Esophagus squamous epithelium (tissue), 5 donors: ENCODE measurements at regions of chr1 and their contacts with region 1.

Region 1: DNA sequence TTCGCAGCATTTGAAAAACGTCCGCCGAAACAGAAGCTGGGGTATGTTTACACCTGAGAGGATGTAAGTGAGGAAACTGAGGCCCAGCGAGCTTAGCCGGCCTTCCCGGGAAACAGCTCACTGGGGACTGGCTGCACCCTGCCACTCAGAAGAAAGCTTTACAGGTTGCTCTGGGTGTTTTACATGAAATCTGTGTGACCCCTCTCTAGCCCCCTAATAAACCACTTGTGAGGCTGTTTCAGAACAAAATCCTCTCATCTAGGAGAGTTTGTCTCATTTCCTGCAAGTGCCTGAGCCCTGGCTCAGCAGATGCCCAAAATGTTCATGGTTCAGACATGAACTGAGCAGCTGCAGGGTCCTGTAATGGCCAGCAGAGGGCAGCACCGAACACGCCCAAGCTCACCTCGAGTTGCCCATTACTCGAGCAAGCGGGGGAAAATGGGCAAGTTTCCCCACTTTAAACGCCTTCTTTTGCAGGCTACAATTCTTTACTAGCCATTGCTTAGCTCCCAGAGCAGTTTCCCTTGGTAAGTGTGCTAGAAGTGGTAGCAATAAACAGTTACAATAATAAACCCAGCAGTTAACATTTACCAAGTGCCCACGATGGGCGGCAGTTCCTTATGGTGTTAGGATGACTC is 76.4 kb downstream of the FHAD1 start:
- DNase-seq: no peak
- H3K4me3 ChIP-seq: no peak overlapping the region
- H3K27ac ChIP-seq: no peak overlapping the region
- H3K4me1 ChIP-seq: peaks cover 2 to 31% (median 5%) of the 10 kb centered on the region in 3 donors
- H3K27me3 ChIP-seq: no peaks in the 10 kb centered on the region
- CTCF ChIP-seq: peak; percentile 95 to 100 (median 98)
- POLR2A ChIP-seq: no peak

Region 2: GRCh38 chr1:15430787-15431570 is 107.5 kb after region 1 on chr1:
- intact Hi-C with region 1: loop called (anchors 2 kb)
- DNase-seq: no peak
- H3K4me3 ChIP-seq: no peak overlapping the region
- H3K27ac ChIP-seq: peak overlapping the region in 1 of 4 donors; percentile 10
- H3K4me1 ChIP-seq: peaks cover 8 to 26% (median 13%) of the 10 kb centered on the region in 3 donors
- H3K27me3 ChIP-seq: no peaks in the 10 kb centered on the region
- CTCF ChIP-seq: peak; percentile 86 to 98 (median 96)
- POLR2A ChIP-seq: no peak

Region 3: GRCh38 chr1:15501208-15502032 is 177.9 kb after region 1 on chr1:
- intact Hi-C with region 1: loop called (anchors 10 kb)
- DNase-seq: no peak
- H3K4me3 ChIP-seq: no peak overlapping the region
- H3K27ac ChIP-seq: no peak overlapping the region
- H3K4me1 ChIP-seq: no peaks in the 10 kb centered on the region
- H3K27me3 ChIP-seq: no peaks in the 10 kb centered on the region
- CTCF ChIP-seq: peak; percentile 43 to 74 (median 63)
- POLR2A ChIP-seq: no peak